SK-N-SH (cell line): ENCODE measurements at regions of chr11 and their contacts with region 1.

Region 1: GRCh38 chr11:8092587-8093424 is 11.8 kb downstream of the TUB start:
- DNase-seq: peak; percentile 90
- H3K4me3 ChIP-seq: no peak overlapping the region
- H3K27ac ChIP-seq: no peak overlapping the region; a peak in 1 of 4 replicates
- H3K4me1 ChIP-seq: peaks cover 0 to 45% of the 10 kb centered on the region in 2 experiments; a peak in 1 of 4 replicates
- H3K27me3 ChIP-seq: no peaks in the 10 kb centered on the region
- CTCF ChIP-seq: peak; percentile 73
- EP300 ChIP-seq: no peak
- RAD21 ChIP-seq: peak; percentile 64

Region 2: GRCh38 chr11:7986768-7987559 is 105.8 kb before region 1 on chr11 and contains the start of gene EIF3F:
- CTCF ChIA-PET with region 1: interaction called, 17 read pairs
- POLR2A ChIA-PET with region 1: interaction called, 3 read pairs
- DNase-seq: peak; percentile 93
- H3K4me3 ChIP-seq: peak within 1 kb of the TSS; percentile 88 to 96
- H3K27ac ChIP-seq: peak within 1 kb of the TSS in 1 of 2 experiments; percentile 52; a peak in 3 of 4 replicates
- H3K4me1 ChIP-seq: peaks cover 7 to 12% of the 10 kb centered on the region in 2 experiments
- H3K27me3 ChIP-seq: no peaks in the 10 kb centered on the region
- CTCF ChIP-seq: peak; percentile 91
- EP300 ChIP-seq: peak; percentile 30 to 46; a peak in 3 of 4 replicates
- RAD21 ChIP-seq: peak; percentile 76
- polyA plus RNA-seq, gene EIF3F: 213 and 341 TPM in 2 replicates

Region 3: DNA sequence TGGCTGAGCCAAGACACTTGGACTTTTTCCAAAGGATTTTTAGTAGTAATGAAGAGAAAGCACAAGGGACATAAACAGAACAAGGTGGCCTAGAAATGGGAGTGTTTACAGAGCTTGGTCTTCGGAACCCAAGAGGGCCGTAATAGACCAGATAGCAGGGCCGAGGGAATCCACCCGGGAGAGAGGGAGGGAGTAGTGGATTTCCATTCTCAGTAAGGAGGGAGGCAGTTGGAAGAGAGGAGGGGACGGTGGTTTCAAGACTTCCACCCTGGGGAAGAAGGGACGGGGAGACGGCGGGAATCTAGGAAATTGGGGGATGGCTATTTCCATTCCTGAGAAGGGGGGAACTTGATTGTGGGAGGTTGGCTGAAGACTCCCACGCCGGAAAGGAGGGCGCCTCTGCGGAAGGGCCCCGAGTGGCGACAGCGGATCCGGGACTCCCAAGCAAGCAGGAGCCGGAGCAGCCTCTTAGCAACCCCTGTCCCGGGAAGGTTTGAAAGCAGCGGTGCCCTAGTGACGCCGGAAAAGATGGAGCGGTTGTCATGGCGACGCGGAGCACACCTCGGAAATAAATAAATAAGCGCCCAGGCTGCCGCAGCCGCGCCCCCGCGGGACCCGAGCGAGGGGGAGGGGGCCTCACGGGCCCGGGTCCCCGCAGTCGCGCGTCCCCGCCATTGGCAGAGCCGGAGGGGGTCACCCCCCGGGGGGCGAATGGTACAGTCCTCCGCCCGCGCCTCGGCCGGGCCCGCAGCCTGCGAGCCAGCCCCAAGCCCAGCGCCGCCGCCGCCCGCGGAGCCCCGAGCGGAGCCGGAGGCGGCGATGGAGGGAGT is 74.1 kb before region 1 on chr11:
- CTCF ChIA-PET with region 1: interaction called, 83 read pairs
- POLR2A ChIA-PET with region 1: no interaction called
- DNase-seq: peak; percentile 93
- H3K4me3 ChIP-seq: peak overlapping the region; percentile 62 to 72
- H3K27ac ChIP-seq: peak overlapping the region in 1 of 2 experiments; percentile 38; a peak in 2 of 4 replicates
- H3K4me1 ChIP-seq: peaks cover 10 to 16% of the 10 kb centered on the region in 2 experiments; a peak in 3 of 4 replicates
- H3K27me3 ChIP-seq: no peaks in the 10 kb centered on the region
- CTCF ChIP-seq: no peak
- EP300 ChIP-seq: no peak
- RAD21 ChIP-seq: no peak

Region 4: DNA sequence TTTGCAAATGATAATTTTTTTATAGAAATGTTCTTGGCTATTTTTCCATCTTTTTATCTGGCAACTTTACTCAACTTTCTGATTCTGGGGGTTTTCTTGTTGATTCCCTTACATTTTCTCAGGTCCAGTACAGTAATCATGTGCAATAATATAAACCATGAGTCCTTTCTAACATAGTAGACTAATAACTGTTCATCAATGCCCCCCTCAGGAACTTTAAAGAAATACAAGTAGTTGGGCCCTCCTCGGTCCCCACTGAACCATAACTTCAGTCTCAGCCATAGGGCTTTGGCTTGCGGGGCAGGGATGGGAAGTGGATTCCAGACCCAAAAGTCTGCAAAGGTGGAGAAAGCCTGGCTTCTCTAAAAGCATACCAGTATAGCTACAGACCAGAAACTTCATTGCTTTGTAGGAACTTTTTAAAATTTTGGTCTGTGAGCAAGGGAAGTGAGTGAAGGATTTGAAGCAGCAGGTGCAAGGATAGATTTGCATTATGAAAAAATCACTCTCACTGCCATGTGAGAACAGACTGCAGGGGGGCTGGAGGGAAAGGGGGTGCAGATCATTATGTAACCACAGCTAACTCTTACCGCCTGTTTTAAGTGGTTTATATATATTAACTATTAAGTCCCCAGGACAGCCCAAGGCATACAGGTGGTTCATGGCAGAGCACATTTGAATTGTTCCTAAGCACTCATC is 22.2 kb before region 1 on chr11:
- CTCF ChIA-PET with region 1: interaction called, 75 read pairs
- POLR2A ChIA-PET with region 1: interaction called, 4 read pairs
- DNase-seq: peak; percentile 73
- H3K4me3 ChIP-seq: no peak overlapping the region
- H3K27ac ChIP-seq: peak overlapping the region in 1 of 2 experiments; percentile 99; a peak in 2 of 4 replicates
- H3K4me1 ChIP-seq: peaks cover 17 to 50% of the 10 kb centered on the region in 2 experiments
- H3K27me3 ChIP-seq: no peaks in the 10 kb centered on the region; the same call in 1 of the 2 replicates
- CTCF ChIP-seq: peak; percentile 59
- EP300 ChIP-seq: no peak
- RAD21 ChIP-seq: peak; percentile 87

Region 5: GRCh38 chr11:8111636-8112035 is 18.8 kb after region 1 on chr11:
- CTCF ChIA-PET with region 1: interaction called, 43 read pairs
- POLR2A ChIA-PET with region 1: no interaction called
- DNase-seq: no peak
- H3K4me3 ChIP-seq: no peak overlapping the region
- H3K27ac ChIP-seq: peak overlapping the region in 1 of 2 experiments; percentile 64; a peak in 2 of 4 replicates
- H3K4me1 ChIP-seq: peaks cover 0 to 13% of the 10 kb centered on the region in 2 experiments; a peak in 2 of 4 replicates
- H3K27me3 ChIP-seq: no peaks in the 10 kb centered on the region
- CTCF ChIP-seq: no peak
- EP300 ChIP-seq: no peak
- RAD21 ChIP-seq: no peak